ENCODE measurements at regions of chr17 and their contacts with region 1.

Region 1: GRCh38 chr17:55770148-55770870 is 19.5 kb downstream of the PCTP start:
- DNase-seq: no peak
- ATAC-seq: no peak
- H3K4me3 ChIP-seq: no peak overlapping the region
- H3K27ac ChIP-seq: no peak overlapping the region
- H3K4me1 ChIP-seq: no peaks in the 10 kb centered on the region
- H3K27me3 ChIP-seq: no peaks in the 10 kb centered on the region
- CTCF ChIP-seq: peak; percentile 24 to 51 (median 42); a peak in 4 of 6 replicates
- EP300 ChIP-seq: no peak
- POLR2A ChIP-seq: no peak
- RAD21 ChIP-seq: peak; percentile 56; the same call in 1 of the 2 replicates

Region 2: DNA sequence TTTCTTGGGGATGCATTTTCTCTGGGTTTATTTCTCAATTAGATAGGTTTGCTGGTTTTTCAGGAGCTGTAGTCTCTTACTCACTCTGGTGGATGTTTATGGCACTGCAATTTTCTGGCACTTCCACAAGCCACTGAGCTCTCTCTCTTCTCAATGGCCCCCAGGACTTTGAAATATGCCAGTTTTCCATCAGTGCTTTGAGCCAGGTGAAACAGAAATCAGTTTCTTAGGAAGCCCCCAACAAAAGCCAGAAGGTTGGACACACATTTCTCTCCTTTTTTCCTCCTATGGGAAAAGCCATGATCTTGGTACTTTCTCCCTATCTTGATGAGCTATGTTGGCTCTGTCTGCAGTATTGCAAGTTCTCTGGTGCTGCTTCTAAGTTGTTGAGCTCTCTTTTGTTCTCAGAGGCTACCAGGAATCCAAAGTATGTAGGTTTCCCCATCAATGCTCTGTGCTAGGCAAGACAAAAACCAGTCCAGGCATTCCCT is 168.4 kb before region 1 on chr17:
- CTCF ChIA-PET with region 1: interaction called, 6 read pairs
- POLR2A ChIA-PET with region 1: no interaction called
- RAD21 ChIA-PET with region 1: interaction called, 7 read pairs
- SMC1A ChIA-PET with region 1: interaction called, 3 read pairs
- in situ Hi-C with region 1: no loop called
- intact Hi-C with region 1: loop called (anchors 5 kb)
- DNase-seq: no peak
- ATAC-seq: peak; percentile 69
- H3K4me3 ChIP-seq: no peak overlapping the region
- H3K27ac ChIP-seq: no peak overlapping the region
- H3K4me1 ChIP-seq: no peaks in the 10 kb centered on the region
- H3K27me3 ChIP-seq: no peaks in the 10 kb centered on the region
- CTCF ChIP-seq: peak; percentile 71 to 77 (median 75)
- EP300 ChIP-seq: no peak
- POLR2A ChIP-seq: no peak
- RAD21 ChIP-seq: peak; percentile 82

Region 3: DNA sequence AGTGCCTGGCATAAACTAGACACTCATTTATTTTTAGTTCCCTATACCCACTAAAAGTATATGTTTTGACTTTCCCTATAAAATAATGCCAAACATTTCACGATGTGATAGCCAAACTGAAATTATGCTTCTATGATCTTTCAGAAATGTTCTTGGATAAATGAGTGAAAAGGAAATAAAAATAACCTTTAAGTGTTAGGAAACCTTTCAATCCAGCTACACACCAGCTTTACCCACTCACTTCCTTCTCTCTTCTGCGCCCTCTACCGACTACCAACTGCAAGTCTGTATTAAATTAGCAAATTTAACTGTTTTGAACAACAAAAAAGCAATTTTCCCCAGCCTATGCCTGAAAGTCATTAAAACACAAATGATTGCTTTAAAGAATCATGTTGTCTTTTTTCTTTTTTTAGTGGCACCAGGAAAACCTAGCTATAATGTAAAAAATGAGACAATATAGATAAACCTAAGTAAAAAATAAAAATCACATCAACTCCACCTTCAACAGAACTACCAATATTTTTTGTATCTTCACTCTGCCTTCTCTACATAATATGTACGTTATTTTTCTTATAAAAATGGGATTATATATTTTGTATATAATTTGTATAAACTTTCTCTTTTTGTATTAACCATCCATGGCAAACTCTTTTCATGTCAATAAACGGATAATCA is 34.4 kb before region 1 on chr17:
- CTCF ChIA-PET with region 1: interaction called, 11 read pairs
- POLR2A ChIA-PET with region 1: no interaction called
- RAD21 ChIA-PET with region 1: no interaction called
- SMC1A ChIA-PET with region 1: interaction called, 4 read pairs
- in situ Hi-C with region 1: no loop called
- intact Hi-C with region 1: no loop called
- DNase-seq: no peak
- ATAC-seq: peak; percentile 69
- H3K4me3 ChIP-seq: no peak overlapping the region
- H3K27ac ChIP-seq: no peak overlapping the region
- H3K4me1 ChIP-seq: no peaks in the 10 kb centered on the region; the same call in 1 of the 2 replicates
- H3K27me3 ChIP-seq: no peaks in the 10 kb centered on the region; a peak in 1 of 4 replicates
- CTCF ChIP-seq: peak; percentile 59 to 67 (median 63)
- EP300 ChIP-seq: no peak
- POLR2A ChIP-seq: no peak
- RAD21 ChIP-seq: peak; percentile 35

Region 4: DNA sequence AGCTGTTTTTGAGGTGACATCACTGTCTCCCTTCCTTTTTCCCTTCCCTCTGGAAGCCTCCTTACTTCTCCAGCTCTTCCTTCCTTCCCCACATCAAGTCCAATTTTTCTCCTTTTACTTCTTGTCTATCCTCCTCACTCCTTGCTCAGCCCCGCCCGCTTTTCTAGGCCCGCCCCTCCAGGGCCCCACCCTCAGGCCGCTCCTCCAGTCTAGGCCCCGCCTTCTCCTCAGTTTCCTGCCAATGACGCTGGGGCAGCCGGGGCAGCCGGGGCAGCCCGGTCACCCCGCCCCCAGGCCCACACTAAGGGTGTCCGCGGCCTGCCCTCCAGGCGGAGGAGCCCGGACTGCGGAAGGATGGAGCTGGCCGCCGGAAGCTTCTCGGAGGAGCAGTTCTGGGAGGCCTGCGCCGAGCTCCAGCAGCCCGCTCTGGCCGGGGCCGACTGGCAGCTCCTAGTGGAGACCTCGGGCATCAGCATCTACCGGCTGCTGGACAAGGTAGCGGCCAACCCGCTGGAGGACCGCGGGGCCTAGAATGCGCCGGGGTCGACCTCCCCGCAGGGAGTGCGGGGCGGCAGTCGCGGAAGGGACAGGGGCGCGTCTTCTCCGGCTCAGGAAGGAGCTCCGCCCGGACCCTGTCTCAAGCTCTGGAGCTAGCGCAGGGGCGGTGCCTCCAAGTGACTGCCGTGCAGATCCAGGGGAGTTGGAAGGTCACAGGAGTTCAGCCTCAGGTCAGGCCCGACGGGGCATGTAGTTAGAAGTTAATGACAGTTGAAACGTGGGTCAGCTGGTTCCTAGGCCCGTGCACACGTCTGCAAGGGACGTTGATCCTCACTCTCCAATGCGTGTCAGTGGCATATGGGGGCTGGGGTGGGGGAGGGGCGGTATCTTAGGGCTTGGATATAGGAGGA is 19.3 kb before region 1 on chr17 and contains the start of gene PCTP:
- CTCF ChIA-PET with region 1: interaction called, 23 read pairs
- POLR2A ChIA-PET with region 1: no interaction called
- RAD21 ChIA-PET with region 1: no interaction called
- SMC1A ChIA-PET with region 1: interaction called, 3 read pairs
- in situ Hi-C with region 1: no loop called
- intact Hi-C with region 1: no loop called
- DNase-seq: peak; percentile 36
- ATAC-seq: peak; percentile 100
- H3K4me3 ChIP-seq: peak within 1 kb of the TSS; percentile 77
- H3K27ac ChIP-seq: peak within 1 kb of the TSS; percentile 22; the same call in 1 of the 2 replicates
- H3K4me1 ChIP-seq: peaks cover 4% of the 10 kb centered on the region; the same call in 1 of the 2 replicates
- H3K27me3 ChIP-seq: no peaks in the 10 kb centered on the region
- CTCF ChIP-seq: peak; percentile 17 to 55 (median 41); a peak in 5 of 6 replicates
- EP300 ChIP-seq: no peak
- POLR2A ChIP-seq: peak; percentile 77
- RAD21 ChIP-seq: no peak
- polyA plus RNA-seq, gene PCTP: 1.4 to 2.5 TPM

Region 5: DNA sequence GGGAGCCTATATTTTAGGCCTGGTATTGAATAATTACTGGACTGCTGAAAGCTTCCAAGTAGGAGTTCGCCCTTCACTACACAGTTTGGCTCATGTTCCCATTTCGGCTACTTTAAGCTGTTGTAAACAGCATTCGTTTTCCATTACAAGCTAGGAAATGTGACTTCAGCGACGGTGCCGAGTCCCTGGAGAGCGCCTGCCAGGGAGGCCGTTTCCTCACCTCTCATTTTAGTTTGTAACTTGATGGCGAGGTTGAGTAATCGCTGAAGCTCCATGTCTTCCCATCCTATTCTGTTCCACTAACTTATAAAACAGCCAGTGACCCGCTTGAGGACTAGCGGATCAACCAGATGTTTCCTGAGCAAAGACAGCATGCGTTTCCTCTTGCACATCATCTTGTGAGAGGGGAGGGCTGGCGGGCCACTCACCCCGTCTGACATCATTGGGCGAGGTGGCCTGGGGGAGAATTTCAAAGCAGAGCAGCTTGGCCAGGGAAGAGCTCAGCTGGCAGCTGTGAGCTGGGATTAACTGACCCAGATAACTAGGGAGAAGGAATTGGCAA is 13.5 kb after region 1 on chr17:
- CTCF ChIA-PET with region 1: interaction called, 20 read pairs
- POLR2A ChIA-PET with region 1: no interaction called
- RAD21 ChIA-PET with region 1: no interaction called
- SMC1A ChIA-PET with region 1: interaction called, 7 read pairs
- in situ Hi-C with region 1: no loop called
- intact Hi-C with region 1: no loop called
- DNase-seq: no peak
- ATAC-seq: no peak
- H3K4me3 ChIP-seq: no peak overlapping the region
- H3K27ac ChIP-seq: no peak overlapping the region
- H3K4me1 ChIP-seq: no peaks in the 10 kb centered on the region
- H3K27me3 ChIP-seq: no peaks in the 10 kb centered on the region
- CTCF ChIP-seq: no peak
- EP300 ChIP-seq: no peak
- POLR2A ChIP-seq: no peak
- RAD21 ChIP-seq: no peak